HepG2 (cell line): ENCODE measurements at regions of chr12 and their contacts with region 1.

Region 1: DNA sequence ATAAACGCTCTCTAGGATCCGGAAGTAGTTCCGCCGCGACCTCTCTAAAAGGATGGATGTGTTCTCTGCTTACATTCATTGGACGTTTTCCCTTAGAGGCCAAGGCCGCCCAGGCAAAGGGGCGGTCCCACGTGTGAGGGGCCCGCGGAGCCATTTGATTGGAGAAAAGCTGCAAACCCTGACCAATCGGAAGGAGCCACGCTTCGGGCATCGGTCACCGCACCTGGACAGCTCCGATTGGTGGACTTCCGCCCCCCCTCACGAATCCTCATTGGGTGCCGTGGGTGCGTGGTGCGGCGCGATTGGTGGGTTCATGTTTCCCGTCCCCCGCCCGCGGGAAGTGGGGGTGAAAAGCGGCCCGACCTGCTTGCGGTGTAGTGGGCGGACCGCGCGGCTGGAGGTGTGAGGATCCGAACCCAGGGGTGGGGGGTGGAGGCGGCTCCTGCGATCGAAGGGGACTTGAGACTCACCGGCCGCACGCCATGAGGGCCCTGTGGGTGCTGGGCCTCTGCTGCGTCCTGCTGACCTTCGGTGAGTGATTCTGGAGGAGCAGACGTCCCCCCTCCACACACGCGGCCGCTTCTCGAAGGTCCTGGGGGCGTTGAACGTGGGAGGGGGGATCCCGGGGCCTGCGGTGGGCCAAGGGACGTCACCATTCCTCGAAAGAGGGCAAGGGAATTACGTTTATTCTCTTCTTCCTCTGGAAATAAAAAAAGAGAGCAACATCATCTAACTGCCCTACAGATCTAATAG is at the start of gene HSP90B1:
- DNase-seq: peak; percentile 100
- ATAC-seq: peak; percentile 87
- H3K4me3 ChIP-seq: peak within 1 kb of the TSS; percentile 84 to 87 (median 85)
- H3K27ac ChIP-seq: peak within 1 kb of the TSS; percentile 90
- H3K4me1 ChIP-seq: peaks cover 45% of the 10 kb centered on the region
- H3K27me3 ChIP-seq: no peaks in the 10 kb centered on the region; a peak in 1 of 5 replicates
- CTCF ChIP-seq: no peak
- EP300 ChIP-seq: peak in 1 of 2 experiments; percentile 7; a peak in 1 of 4 replicates
- POLR2A ChIP-seq: peak; percentile 95 to 99
- RAD21 ChIP-seq: 0 out of 2 replicates have a peak, but pooled peaks have one; percentile 14
- total RNA-seq, gene HSP90B1: 496 and 954 TPM in 2 replicates

Region 2: GRCh38 chr12:103771466-103771865 is 158.7 kb before region 1 on chr12:
- CTCF ChIA-PET with region 1: no interaction called
- POLR2A ChIA-PET with region 1: no interaction called
- in situ Hi-C with region 1: no loop called
- intact Hi-C with region 1: loop called (anchors 10 kb)
- DNase-seq: peak; percentile 42
- ATAC-seq: peak; percentile 92
- H3K4me3 ChIP-seq: no peak overlapping the region
- H3K27ac ChIP-seq: no peak overlapping the region
- H3K4me1 ChIP-seq: peaks cover 9% of the 10 kb centered on the region; the same call in 1 of the 2 replicates
- H3K27me3 ChIP-seq: no peaks in the 10 kb centered on the region
- CTCF ChIP-seq: peak; percentile 79
- EP300 ChIP-seq: no peak
- POLR2A ChIP-seq: no peak
- RAD21 ChIP-seq: peak; percentile 79

Region 3: DNA sequence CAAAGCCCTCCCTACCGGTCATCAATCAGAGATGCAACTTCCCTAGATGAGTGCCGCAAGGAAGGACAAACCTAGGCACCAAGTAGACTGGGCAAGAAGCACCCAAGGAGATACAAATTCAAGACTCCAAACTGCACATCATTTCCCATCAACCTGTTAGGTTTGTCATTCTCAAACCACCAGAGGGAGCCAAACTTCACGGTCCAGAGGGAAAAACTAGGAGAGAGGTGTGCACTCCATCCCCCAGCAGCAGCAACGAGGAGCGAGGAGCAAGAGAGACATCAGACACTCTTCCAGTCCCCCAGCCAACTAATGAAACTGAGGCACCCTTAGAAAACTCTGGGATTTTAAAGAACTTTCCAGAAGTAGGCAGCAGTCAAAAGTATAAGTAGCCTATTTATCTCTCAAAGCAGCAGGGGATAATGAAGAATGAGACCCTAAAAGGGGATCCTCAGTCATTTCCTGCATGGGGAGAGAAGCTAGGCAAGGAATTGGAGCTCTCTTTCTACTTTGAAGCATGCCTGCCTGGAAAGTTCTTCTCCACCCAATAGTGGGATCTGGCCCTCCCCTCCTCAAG is 52.2 kb before region 1 on chr12:
- CTCF ChIA-PET with region 1: no interaction called
- POLR2A ChIA-PET with region 1: interaction called, 6 read pairs
- in situ Hi-C with region 1: no loop called
- intact Hi-C with region 1: loop called (anchors 2 kb)
- DNase-seq: peak; percentile 64
- ATAC-seq: peak; percentile 86
- H3K4me3 ChIP-seq: no peak overlapping the region
- H3K27ac ChIP-seq: no peak overlapping the region
- H3K4me1 ChIP-seq: peaks cover 45% of the 10 kb centered on the region
- H3K27me3 ChIP-seq: peaks cover 0 to 10% of the 10 kb centered on the region in 2 experiments; a peak in 1 of 5 replicates
- CTCF ChIP-seq: peak; percentile 90
- EP300 ChIP-seq: no peak
- POLR2A ChIP-seq: no peak
- RAD21 ChIP-seq: peak; percentile 64; the same call in 1 of the 2 replicates

Region 4: DNA sequence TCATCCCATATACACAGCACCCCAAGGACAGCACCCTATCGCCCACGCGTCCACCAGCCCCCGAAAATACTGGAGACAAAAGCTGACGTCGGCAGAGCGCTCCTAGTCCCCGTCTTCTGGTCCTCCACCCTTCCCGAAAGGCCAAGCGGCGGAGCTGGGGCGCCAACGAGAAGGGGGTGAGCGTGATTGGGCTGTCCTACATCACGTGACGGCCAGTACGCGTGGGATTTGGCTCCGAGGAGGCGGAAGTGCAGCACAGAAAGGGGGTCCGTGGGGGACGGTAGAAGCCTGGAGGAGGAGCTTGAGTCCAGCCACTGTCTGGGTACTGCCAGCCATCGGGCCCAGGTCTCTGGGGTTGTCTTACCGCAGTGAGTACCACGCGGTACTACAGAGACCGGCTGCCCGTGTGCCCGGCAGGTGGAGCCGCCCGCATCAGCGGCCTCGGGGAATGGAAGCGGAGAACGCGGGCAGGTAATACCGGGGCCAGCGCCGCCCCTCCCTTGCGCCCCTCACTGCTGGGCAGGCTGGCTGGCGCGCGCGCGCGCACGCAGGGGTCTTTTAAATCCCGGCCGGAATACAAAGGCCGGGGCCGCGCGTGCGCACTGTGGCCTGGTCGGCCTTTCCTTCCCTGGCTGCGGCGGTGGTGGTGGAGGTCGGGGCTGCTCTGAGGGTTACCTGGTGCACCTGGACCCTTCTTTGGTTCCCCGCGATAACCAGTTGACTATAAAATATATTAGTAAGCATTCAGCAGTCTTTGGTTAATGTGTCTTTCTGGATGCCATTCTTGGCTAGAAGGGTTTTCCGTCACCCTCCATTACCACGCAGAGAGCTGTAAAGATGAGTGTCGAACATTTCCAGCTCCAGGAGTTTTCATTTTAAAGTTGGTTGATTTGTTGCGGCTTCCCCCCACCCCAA is 35.6 kb after region 1 on chr12 and contains the start of gene TDG:
- CTCF ChIA-PET with region 1: no interaction called
- POLR2A ChIA-PET with region 1: interaction called, 60 read pairs
- in situ Hi-C with region 1: no loop called
- intact Hi-C with region 1: loop called (anchors 2 kb)
- DNase-seq: peak; percentile 98
- ATAC-seq: peak; percentile 99
- H3K4me3 ChIP-seq: peak within 1 kb of the TSS; percentile 68 to 98 (median 82)
- H3K27ac ChIP-seq: peak within 1 kb of the TSS; percentile 86
- H3K4me1 ChIP-seq: peaks cover 62% of the 10 kb centered on the region
- H3K27me3 ChIP-seq: no peaks in the 10 kb centered on the region; a peak in 1 of 5 replicates
- CTCF ChIP-seq: peak; percentile 48; the same call in 1 of the 2 replicates
- EP300 ChIP-seq: no peak
- POLR2A ChIP-seq: peak; percentile 92 to 97
- RAD21 ChIP-seq: peak; percentile 57
- total RNA-seq, gene TDG: 19.5 and 24.0 TPM in 2 replicates

Region 5: DNA sequence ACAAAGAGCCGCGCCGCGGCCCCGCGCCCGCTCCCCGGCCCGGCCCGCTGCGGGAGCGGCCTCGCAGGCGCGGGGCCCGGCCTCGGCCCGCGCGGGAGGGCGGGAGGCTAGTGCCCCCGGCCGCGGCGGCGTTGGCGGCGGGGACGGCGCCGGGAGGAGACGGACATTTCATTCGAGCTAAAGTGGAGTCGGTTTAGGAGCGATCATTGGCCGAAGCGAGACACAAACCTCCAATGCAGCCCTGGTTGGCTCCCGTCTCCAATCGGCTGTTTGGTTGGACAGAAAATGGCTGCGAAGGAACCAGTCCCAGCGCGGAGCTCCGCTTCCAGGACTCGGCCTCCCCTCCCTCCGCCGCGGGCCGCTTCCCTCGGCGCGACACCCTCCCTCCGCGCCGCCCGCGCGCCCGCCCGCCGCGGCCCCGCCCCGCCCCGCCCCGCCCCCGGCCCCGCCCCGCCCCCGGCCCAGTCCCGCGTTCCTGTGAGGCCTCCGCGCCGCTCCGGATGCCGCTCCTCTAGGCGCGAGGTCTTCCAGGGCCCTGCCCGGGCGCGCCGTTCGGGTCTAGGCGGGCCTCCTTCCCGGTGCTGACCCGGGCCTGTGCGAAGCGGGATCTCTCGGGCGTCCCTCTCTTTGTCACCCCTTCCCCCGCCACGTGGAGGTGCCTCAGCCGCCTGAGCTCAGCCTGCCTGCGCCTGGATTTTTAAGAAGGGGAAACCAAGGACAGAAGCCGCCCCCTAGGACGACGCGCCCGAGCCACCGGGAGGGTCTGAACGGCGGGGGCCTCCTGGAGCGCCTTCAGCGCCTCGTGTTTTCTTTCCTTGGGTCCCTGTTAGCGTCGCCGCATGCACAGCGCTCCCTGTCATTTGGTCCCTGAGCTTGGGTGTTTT is 207.9 kb after region 1 on chr12 and contains the start of gene NFYB:
- CTCF ChIA-PET with region 1: no interaction called
- POLR2A ChIA-PET with region 1: interaction called, 16 read pairs
- in situ Hi-C with region 1: no loop called
- intact Hi-C with region 1: no loop called
- DNase-seq: peak; percentile 95
- ATAC-seq: peak; percentile 97
- H3K4me3 ChIP-seq: peak within 1 kb of the TSS; percentile 65 to 95 (median 84)
- H3K27ac ChIP-seq: peak within 1 kb of the TSS; percentile 92
- H3K4me1 ChIP-seq: peaks cover 41% of the 10 kb centered on the region
- H3K27me3 ChIP-seq: peaks cover 0 to 4% of the 10 kb centered on the region in 2 experiments; a peak in 2 of 5 replicates
- CTCF ChIP-seq: no peak
- EP300 ChIP-seq: peak in 1 of 2 experiments; percentile 99; a peak in 2 of 4 replicates
- POLR2A ChIP-seq: peak; percentile 64 to 87
- RAD21 ChIP-seq: no peak
- total RNA-seq, gene NFYB: 36.6 and 48.7 TPM in 2 replicates

Region 6: DNA sequence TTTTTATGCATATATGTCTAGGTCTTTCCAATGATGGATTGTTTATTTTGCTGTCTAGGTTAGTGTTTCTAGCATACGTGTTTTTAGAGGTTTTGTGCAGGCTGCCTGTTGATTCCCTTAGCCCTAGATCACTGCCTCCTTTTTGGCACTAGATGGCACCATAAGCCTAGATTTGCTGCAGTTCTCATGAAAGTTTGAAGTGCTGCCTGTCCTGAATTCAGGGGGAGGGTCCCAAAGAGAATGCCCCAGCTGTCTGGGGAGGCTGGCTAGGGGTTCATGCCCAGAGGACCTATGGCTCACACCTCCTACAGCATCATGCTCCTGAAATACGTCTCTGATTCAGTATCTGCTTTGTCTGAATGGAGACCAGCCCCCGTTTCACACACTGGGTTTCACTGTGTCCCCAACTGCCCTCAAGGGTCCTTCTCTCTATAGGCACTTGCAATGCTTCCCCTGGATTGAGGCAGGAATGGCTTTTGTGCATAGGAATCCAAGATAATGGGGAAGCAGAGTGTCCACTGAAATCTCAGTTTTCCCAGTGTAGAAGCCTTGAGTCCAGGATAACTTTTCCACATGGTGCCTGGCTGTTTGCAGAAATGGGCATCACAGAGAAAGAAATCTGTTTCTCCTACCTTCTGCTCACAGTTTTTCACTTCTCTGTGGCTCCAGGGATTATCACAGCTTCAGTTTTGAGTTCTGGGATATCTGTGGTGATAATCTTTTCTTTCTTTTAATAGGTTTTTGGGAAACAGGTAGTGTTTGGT is 271.2 kb after region 1 on chr12:
- CTCF ChIA-PET with region 1: no interaction called
- POLR2A ChIA-PET with region 1: no interaction called
- in situ Hi-C with region 1: no loop called
- intact Hi-C with region 1: no loop called
- DNase-seq: peak; percentile 55
- ATAC-seq: peak; percentile 90
- H3K4me3 ChIP-seq: no peak overlapping the region
- H3K27ac ChIP-seq: no peak overlapping the region
- H3K4me1 ChIP-seq: no peaks in the 10 kb centered on the region
- H3K27me3 ChIP-seq: peaks cover 0 to 9% of the 10 kb centered on the region in 2 experiments; a peak in 3 of 5 replicates
- CTCF ChIP-seq: peak; percentile 90
- EP300 ChIP-seq: no peak
- POLR2A ChIP-seq: no peak
- RAD21 ChIP-seq: peak; percentile 82

Region 7: GRCh38 chr12:104303538-104304151 is 373.4 kb after region 1 on chr12 and contains the start of gene EID3:
- CTCF ChIA-PET with region 1: no interaction called
- POLR2A ChIA-PET with region 1: no interaction called
- in situ Hi-C with region 1: no loop called
- intact Hi-C with region 1: no loop called
- DNase-seq: no peak
- ATAC-seq: peak; percentile 18
- H3K4me3 ChIP-seq: no peak within 1 kb of the TSS
- H3K27ac ChIP-seq: no peak within 1 kb of the TSS
- H3K4me1 ChIP-seq: peaks cover 25% of the 10 kb centered on the region
- H3K27me3 ChIP-seq: no peaks in the 10 kb centered on the region
- CTCF ChIP-seq: no peak
- EP300 ChIP-seq: no peak
- POLR2A ChIP-seq: no peak
- RAD21 ChIP-seq: no peak
- total RNA-seq, gene EID3: 0.27 and 4.5 TPM in 2 replicates